CD4-positive, alpha-beta T cell (primary cell): ENCODE measurements at regions of chr4 and their contacts with region 1.

Region 1: DNA sequence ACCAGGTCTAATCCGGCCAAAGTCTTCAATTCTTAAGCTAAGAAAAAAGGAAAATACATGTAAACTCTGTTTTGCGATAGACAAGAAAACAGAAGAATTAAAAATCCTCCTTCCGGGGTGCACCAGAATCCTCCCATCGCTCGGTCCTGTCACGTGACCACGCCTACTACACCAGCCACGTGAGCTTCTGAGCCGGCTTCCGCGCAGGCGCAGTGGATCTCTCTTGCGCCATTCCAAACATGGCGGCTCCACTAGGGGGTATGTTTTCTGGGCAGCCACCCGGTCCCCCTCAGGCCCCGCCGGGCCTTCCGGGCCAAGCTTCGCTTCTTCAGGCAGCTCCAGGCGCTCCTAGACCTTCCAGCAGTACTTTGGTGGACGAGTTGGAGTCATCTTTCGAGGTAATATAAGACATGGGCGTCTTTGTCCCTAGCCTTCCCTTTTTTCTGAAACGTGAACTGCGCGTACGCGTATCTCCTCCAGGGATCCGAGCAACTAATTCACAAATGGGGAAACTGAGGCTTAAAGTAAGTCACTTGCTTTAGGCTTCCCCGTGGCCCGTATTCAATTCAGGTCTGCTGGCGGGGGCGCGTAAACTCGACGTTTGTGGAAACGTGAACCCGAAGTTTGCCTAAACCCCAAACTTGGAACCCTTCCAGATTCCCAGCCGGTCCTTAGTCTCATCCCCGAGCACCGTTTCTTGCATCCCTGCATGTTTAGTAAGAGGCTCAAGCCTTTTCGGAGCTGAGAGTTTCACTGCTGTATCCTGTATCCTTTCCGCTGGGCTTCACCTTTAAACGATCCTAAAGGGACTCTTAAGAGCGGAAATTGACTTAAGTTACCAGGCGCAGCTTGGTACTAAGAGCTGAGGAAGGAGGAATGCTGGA is at the start of gene MED28:
- DNase-seq: peak; percentile 90 to 98 (median 94)
- ATAC-seq: peak; percentile 93
- H3K4me3 ChIP-seq: peak within 1 kb of the TSS; percentile 94
- H3K4me3 Mint-ChIP-seq: peak within 1 kb of the TSS; percentile 93
- H3K27ac ChIP-seq: peak within 1 kb of the TSS; percentile 68 to 92
- H3K27ac Mint-ChIP-seq: peak within 1 kb of the TSS; percentile 94
- H3K4me1 ChIP-seq: peaks cover 55% of the 10 kb centered on the region
- H3K4me1 Mint-ChIP-seq: peaks cover 50% of the 10 kb centered on the region
- H3K27me3 ChIP-seq: no peaks in the 10 kb centered on the region
- H3K27me3 Mint-ChIP-seq: no peaks in the 10 kb centered on the region
- CTCF ChIP-seq: no peak
- total RNA-seq, gene MED28: 50.5 to 64.7 TPM

Region 2: DNA sequence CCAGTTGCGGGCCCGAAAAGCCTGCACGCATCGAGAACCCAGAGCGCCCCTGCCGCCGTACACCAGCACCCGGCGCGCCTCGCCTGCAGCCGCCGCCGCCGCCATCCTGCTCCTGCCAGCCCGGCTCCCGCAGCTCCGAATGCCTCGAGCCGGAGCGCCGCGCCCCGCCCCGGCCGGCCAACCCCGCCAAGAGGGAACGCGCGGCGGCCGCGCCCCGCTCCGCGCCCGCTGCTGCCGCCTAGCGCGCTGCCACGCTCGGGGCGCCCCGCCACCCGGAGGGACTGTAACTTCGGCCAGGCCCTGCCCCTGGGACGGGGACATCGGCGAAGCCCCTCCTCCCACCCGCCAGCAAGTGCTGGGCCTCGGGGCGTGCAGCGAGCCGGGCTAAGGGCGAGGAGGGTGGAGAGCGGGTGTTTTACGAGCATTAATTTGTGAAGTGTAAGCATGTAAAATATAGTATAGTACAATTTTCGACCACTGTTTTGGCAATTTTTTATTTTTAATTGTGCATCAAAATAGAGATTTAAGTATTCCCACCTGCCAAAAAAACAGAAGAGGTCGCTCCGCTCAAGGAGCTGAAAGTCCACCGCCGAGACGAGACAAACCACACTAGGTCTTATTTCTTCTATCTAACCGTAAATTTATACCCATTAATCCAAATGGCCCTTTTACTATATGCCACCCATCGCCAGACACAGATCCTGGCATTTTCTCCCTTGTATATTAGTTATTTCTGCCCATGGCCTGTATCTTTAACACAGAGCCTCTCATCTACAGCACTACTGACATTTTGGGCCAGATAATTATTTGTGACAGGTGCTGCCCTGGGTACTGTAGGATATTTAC is 102.5 kb before region 1 on chr4 and contains the start of gene QDPR:
- CTCF ChIA-PET with region 1: interaction called, 3 read pairs
- POLR2A ChIA-PET with region 1: interaction called, 4 read pairs
- intact Hi-C with region 1: loop called in 1 of 2 experiments (anchors 5 kb)
- DNase-seq: peak; percentile 51 to 87 (median 68)
- ATAC-seq: peak; percentile 91
- H3K4me3 ChIP-seq: peak within 1 kb of the TSS; percentile 86
- H3K4me3 Mint-ChIP-seq: peak within 1 kb of the TSS; percentile 99
- H3K27ac ChIP-seq: peak within 1 kb of the TSS in 1 of 2 donors; percentile 9
- H3K27ac Mint-ChIP-seq: peak within 1 kb of the TSS; percentile 84
- H3K4me1 ChIP-seq: peaks cover 23% of the 10 kb centered on the region
- H3K4me1 Mint-ChIP-seq: peaks cover 33% of the 10 kb centered on the region
- H3K27me3 ChIP-seq: no peaks in the 10 kb centered on the region
- H3K27me3 Mint-ChIP-seq: peaks cover 6% of the 10 kb centered on the region
- CTCF ChIP-seq: peak; percentile 47
- total RNA-seq, gene QDPR: 15.3 to 15.7 TPM

Region 3: GRCh38 chr4:17657090-17657489 is 42.4 kb after region 1 on chr4:
- CTCF ChIA-PET with region 1: no interaction called
- POLR2A ChIA-PET with region 1: no interaction called
- intact Hi-C with region 1: no loop called
- DNase-seq: no peak
- ATAC-seq: no peak
- H3K4me3 ChIP-seq: no peak overlapping the region
- H3K4me3 Mint-ChIP-seq: no peak overlapping the region
- H3K27ac ChIP-seq: no peak overlapping the region
- H3K27ac Mint-ChIP-seq: no peak overlapping the region
- H3K4me1 ChIP-seq: no peaks in the 10 kb centered on the region
- H3K4me1 Mint-ChIP-seq: no peaks in the 10 kb centered on the region
- H3K27me3 ChIP-seq: no peaks in the 10 kb centered on the region
- H3K27me3 Mint-ChIP-seq: no peaks in the 10 kb centered on the region
- CTCF ChIP-seq: no peak

Region 4: DNA sequence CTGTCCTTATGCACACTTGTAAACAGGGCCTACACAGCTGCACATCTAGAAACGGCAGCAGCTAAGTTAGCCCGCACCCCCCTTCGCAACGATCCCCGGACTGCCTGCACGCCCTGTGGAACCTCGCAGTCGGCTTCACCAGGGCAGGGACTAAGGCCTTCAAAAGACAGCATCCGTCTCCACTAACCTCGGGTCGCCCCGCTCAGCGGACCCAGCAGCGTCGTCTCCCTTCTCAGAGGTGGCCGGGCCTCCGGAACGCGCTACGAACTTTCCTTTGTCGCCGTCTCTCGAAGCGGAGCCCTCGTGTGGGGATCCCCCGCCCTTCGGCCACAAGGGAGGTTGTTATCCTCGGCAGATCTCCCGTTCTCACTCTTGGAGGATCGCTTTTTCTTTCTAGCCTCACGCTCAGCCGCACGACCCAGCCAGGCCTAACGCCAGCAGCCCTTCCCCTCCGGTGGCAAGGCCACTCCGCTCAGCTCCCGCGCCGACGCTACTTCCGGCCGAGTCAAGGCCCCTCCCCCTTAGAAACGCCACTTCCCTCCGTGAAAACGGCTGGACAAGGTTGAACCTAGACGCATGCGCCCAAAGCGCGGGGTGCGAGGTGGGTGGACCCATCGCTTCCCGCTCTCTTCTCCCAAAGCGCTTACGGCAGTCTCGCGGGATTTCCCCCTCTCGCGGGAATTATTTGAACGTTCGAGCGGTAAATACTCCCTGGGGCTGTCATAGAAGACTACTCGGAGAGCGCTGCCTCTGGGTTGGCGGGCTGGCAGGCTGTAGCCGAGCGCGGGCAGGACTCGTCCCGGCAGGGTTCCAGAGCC is 195.8 kb after region 1 on chr4 and contains the starts of genes DCAF16 and NCAPG:
- CTCF ChIA-PET with region 1: no interaction called
- POLR2A ChIA-PET with region 1: interaction called, 21 read pairs
- intact Hi-C with region 1: loop called (anchors 2 to 10 kb)
- DNase-seq: peak; percentile 97 to 100 (median 99)
- ATAC-seq: peak; percentile 86
- H3K4me3 ChIP-seq: peak within 1 kb of the TSS; percentile 92
- H3K4me3 Mint-ChIP-seq: peak within 1 kb of the TSS; percentile 97
- H3K27ac ChIP-seq: peak within 1 kb of the TSS; percentile 92 to 96
- H3K27ac Mint-ChIP-seq: peak within 1 kb of the TSS; percentile 96
- H3K4me1 ChIP-seq: peaks cover 20% of the 10 kb centered on the region
- H3K4me1 Mint-ChIP-seq: peaks cover 63% of the 10 kb centered on the region
- H3K27me3 ChIP-seq: no peaks in the 10 kb centered on the region
- H3K27me3 Mint-ChIP-seq: no peaks in the 10 kb centered on the region
- CTCF ChIP-seq: no peak
- total RNA-seq, gene DCAF16: 88.5 to 91.4 TPM
- total RNA-seq, gene NCAPG: 0.58 to 0.61 TPM